ENCODE measurements at regions of chr10 and their contacts with region 1.

Region 1: GRCh38 chr10:37675449-37675848 is 182.0 kb downstream of the ZNF248 start:
- DNase-seq: no peak
- ATAC-seq: no peak
- H3K4me3 ChIP-seq: no peak overlapping the region
- H3K27ac ChIP-seq: no peak overlapping the region
- H3K4me1 ChIP-seq: no peaks in the 10 kb centered on the region
- H3K27me3 ChIP-seq: no peaks in the 10 kb centered on the region
- CTCF ChIP-seq: no peak

Region 2: GRCh38 chr10:37640301-37640700 is 35.1 kb before region 1 on chr10:
- intact Hi-C with region 1: loop called in 1 of 2 experiments (anchors 2 kb)
- DNase-seq: no peak
- ATAC-seq: no peak
- H3K4me3 ChIP-seq: no peak overlapping the region
- H3K27ac ChIP-seq: no peak overlapping the region
- H3K4me1 ChIP-seq: no peaks in the 10 kb centered on the region
- H3K27me3 ChIP-seq: no peaks in the 10 kb centered on the region
- CTCF ChIP-seq: no peak

Measured in psoas muscle (tissue), 8 donors.